Left colon (tissue), 2 donors: ENCODE measurements at regions of chr14 and their contacts with region 1.

Region 1: GRCh38 chr14:76352639-76353281 is 23.2 kb upstream of the ESRRB start:
- DNase-seq: peak in 1 of 2 donors; percentile 62
- ATAC-seq: peak; percentile 49

Region 2: DNA sequence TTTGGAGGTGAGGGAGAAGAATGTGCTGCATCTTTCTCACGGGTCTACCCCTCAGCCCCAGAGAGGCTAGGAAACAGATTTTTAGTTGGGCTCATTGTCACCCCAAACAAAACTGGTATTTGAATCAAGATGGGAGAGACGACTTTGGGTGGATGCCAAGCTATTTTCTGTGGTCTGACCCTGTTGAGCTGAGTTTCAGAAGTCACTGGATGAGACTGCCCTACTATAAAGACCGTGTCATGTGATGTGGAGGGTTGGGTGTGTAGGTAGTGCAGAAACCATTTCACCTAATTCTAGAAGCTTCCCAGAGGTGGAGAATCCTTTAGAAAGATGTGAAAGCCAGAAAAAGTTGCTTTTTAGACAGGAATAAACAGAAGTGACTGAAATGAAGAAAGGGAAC is 307.0 kb before region 1 on chr14:
- intact Hi-C with region 1: loop called in 1 of 2 experiments (anchors 10 kb)
- DNase-seq: no peak
- ATAC-seq: no peak

Region 3: DNA sequence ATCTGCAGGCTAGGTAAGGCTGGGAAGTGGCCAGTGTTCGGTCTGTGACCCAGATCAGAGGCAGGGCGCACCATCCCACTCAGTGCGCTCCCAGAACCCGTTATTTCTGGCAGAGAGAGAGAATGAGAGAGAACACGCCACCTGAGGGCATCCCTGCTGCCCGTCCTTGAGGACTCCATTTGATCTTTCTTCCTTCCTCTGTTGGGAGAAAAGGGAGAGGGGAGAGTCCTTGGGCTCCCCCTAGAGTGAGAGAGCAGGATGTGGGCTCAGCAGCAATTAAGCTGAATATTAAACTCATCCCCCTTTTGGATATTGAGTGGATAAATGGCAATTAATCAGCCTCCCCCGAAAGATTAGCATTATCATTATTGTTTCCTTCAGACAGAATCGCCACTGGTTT is 296.6 kb before region 1 on chr14:
- intact Hi-C with region 1: loop called in 1 of 2 experiments (anchors 5 kb)
- DNase-seq: no peak
- ATAC-seq: no peak